Right ventricle myocardium superior (tissue), 1 donor: ENCODE measurements at regions of chr4 and their contacts with region 1.

Region 1: DNA sequence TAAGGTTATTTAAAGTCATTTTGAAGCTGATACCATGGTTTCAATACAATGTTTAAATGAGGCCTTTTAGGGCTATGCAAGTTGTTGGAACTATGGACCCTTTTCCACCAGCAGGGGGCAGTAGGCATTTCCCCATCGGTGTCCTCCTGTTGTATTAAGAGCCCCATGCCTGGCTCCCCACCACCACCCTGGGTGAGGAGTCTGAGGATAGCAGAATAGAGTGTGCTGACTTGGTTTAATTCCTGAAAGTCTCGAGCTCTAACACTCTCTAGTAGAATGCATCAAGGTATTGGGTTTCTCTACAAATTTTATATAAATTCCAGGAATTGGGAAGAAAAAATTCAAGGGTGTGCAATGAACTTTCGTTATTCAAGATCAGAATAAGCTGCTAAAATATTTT is 234.8 kb upstream of the JADE1 start:
- DNase-seq: peak; percentile 55
- ATAC-seq: peak; percentile 45

Region 2: GRCh38 chr4:128757712-128758111 is 183.0 kb after region 1 on chr4:
- intact Hi-C with region 1: loop called (anchors 10 kb)
- DNase-seq: peak; percentile 71
- ATAC-seq: peak; percentile 99